Transverse colon (tissue), 4 donors: ENCODE measurements at regions of chr1 and their contacts with region 1.

Region 1: GRCh38 chr1:35202048-35202719 is 9.2 kb upstream of the SFPQ start:
- DNase-seq: peak; percentile 72
- H3K4me3 ChIP-seq: no peak overlapping the region
- H3K27ac ChIP-seq: no peak overlapping the region
- H3K4me1 ChIP-seq: peaks cover 0 to 5% (median 2%) of the 10 kb centered on the region in 4 donors
- H3K27me3 ChIP-seq: no peaks in the 10 kb centered on the region
- CTCF ChIP-seq: peak; percentile 76 to 86 (median 84)
- EP300 ChIP-seq: no peak
- POLR2A ChIP-seq: no peak

Region 2: GRCh38 chr1:35280006-35280405 is 77.8 kb after region 1 on chr1:
- in situ Hi-C with region 1: no loop called
- intact Hi-C with region 1: loop called (anchors 5 kb)
- DNase-seq: no peak
- H3K4me3 ChIP-seq: no peak overlapping the region
- H3K27ac ChIP-seq: no peak overlapping the region
- H3K4me1 ChIP-seq: no peaks in the 10 kb centered on the region
- H3K27me3 ChIP-seq: no peaks in the 10 kb centered on the region
- CTCF ChIP-seq: no peak
- EP300 ChIP-seq: no peak
- POLR2A ChIP-seq: no peak

Region 3: GRCh38 chr1:35298464-35298863 is 96.3 kb after region 1 on chr1:
- in situ Hi-C with region 1: loop called in 1 of 4 experiments (anchors 10 kb)
- intact Hi-C with region 1: loop called (anchors 5 kb)
- DNase-seq: no peak
- H3K4me3 ChIP-seq: no peak overlapping the region
- H3K27ac ChIP-seq: no peak overlapping the region
- H3K4me1 ChIP-seq: peaks cover 0 to 7% (median 0%) of the 10 kb centered on the region in 4 donors
- H3K27me3 ChIP-seq: no peaks in the 10 kb centered on the region
- CTCF ChIP-seq: peak in 3 of 5 experiments; percentile 31 to 41 (median 33)
- EP300 ChIP-seq: no peak
- POLR2A ChIP-seq: no peak